RWPE1 (cell line): ENCODE measurements at regions of chr16 and their contacts with region 1.

Region 1: GRCh38 chr16:66406534-66407221 is 20.4 kb upstream of the BEAN1 start:
- DNase-seq: peak; percentile 90
- H3K27ac ChIP-seq: peak overlapping the region; percentile 77
- CTCF ChIP-seq: peak; percentile 78

Region 2: GRCh38 chr16:66483689-66484481 is 77.2 kb after region 1 on chr16:
- CTCF ChIA-PET with region 1: interaction called, 11 read pairs
- POLR2A ChIA-PET with region 1: no interaction called
- DNase-seq: peak; percentile 78
- H3K27ac ChIP-seq: no peak overlapping the region
- CTCF ChIP-seq: peak; percentile 94